Psoas muscle (tissue), 8 donors: ENCODE measurements at regions of chr2 and their contacts with region 1.

Region 1: DNA sequence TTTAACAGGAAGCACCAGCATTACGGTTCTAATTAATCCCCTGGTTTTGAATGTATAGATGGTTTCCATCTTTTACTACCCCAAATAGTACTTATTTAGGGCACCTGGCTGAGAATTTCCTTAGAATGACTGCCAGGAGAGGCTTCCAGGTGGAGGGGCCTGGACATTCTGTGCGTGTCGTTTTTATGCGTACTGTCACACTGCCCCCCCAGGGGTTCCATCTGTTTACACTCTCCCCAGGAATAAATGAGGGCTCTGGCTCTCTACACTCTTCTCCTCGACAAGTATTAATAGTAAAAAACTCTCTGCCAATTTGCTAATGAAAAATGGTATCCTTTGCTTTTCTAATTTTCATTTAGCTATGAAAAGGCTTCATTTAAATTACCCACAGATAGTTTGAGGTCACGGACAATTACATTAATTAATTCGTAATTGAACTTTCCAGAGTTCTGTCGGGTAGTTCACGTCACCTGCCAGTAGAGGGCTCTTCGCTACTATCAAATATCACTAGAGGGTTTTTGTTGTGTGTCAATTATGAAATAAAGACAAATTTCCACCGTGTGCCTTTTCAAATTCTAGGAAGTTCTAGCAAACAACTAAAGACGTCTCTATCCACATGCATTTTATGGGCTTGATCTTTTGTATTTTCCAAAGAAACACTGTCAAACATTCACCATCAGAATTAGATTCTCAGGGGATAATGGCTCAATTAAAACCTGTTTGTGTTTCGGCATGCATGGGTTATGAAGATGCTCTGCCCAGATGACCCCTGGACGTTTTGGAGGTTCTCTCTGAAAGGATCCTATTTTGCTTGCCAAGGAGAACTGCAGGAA is 88.8 kb upstream of the ASB18 start:
- DNase-seq: no peak
- ATAC-seq: peak in 2 of 4 donors; percentile 53 to 74
- H3K4me3 ChIP-seq: no peak overlapping the region
- H3K27ac ChIP-seq: no peak overlapping the region
- H3K4me1 ChIP-seq: no peaks in the 10 kb centered on the region
- H3K27me3 ChIP-seq: no peaks in the 10 kb centered on the region
- CTCF ChIP-seq: peak; percentile 79

Region 2: GRCh38 chr2:236512902-236513435 is 160.0 kb after region 1 on chr2:
- intact Hi-C with region 1: loop called in 1 of 2 experiments (anchors 5 kb)
- DNase-seq: peak; percentile 55 to 77
- ATAC-seq: peak; percentile 73 to 94 (median 89)
- H3K4me3 ChIP-seq: no peak overlapping the region
- H3K27ac ChIP-seq: no peak overlapping the region
- H3K4me1 ChIP-seq: no peaks in the 10 kb centered on the region
- H3K27me3 ChIP-seq: peaks cover 0 to 3% (median 2%) of the 10 kb centered on the region in 3 donors
- CTCF ChIP-seq: peak; percentile 78

Region 3: DNA sequence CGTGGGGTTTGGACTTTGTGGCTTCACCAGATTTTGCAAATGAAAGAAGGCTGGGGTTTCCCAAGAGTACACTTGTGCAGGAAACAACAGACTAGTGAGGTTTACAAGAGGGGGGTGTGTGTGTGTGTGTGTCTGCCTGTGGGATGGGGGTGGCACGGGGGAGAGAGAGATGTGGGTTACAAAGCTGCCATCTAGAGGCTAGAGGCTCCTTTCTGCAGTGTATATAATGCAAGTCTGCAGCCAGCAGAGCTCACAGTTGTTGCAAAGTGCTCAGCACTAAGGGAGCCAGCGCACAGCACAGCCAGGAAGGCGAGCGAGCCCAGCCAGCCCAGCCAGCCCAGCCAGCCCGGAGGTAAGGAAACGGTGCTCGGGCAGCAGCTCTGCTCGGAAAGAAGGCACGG is 216.6 kb after region 1 on chr2 and contains the start of gene ACKR3:
- intact Hi-C with region 1: loop called in 1 of 2 experiments (anchors 2 kb)
- DNase-seq: peak; percentile 72 to 87
- ATAC-seq: peak; percentile 78 to 84 (median 79)
- H3K4me3 ChIP-seq: peak within 1 kb of the TSS; percentile 65
- H3K27ac ChIP-seq: peak within 1 kb of the TSS; percentile 79
- H3K4me1 ChIP-seq: peaks cover 39% of the 10 kb centered on the region
- H3K27me3 ChIP-seq: no peaks in the 10 kb centered on the region
- CTCF ChIP-seq: peak; percentile 23
- total RNA-seq, gene ACKR3: 7.8 to 23.2 (median 13.7) TPM

Region 4: DNA sequence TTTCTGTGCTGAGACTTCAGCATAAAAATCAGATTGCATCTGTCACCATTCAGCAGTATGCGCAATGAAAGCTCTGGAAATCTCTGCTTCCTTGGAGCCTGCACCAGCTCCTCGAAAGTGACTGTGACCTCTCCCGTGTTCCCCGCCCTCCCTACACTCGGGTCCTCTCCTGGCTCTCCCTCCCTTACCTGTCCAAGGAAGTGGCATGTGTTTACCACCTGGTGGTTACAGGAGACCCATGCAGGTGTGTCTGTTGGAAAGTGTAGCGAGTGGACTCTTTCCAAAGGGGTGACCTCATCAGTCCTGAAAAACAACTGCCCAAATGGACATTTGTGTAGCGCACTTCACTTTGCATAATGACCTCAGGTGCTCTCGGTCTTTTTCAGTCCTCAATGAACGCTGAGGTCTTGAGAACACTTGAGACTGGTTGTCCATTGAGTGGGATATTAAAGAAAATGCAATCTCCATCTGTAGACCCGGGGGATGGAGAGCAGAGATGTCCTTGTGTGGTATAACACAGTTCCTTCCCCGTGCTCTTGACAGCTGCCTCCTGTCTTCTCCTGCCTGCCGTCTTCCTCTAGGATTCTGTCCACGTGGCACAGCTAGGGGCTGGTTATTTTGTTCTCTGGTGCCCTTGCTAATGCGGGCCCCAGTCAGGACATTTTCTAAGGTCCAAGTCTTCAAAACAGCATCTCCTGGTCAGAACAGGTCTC is 349.8 kb after region 1 on chr2:
- intact Hi-C with region 1: no loop called
- DNase-seq: no peak
- ATAC-seq: no peak
- H3K4me3 ChIP-seq: no peak overlapping the region
- H3K27ac ChIP-seq: no peak overlapping the region
- H3K4me1 ChIP-seq: no peaks in the 10 kb centered on the region
- H3K27me3 ChIP-seq: no peaks in the 10 kb centered on the region
- CTCF ChIP-seq: no peak

Region 5: GRCh38 chr2:237026981-237027711 is 674.2 kb after region 1 on chr2:
- intact Hi-C with region 1: loop called (anchors 1 to 2 kb)
- DNase-seq: peak; percentile 77 to 83
- ATAC-seq: peak; percentile 93 to 98 (median 94)
- H3K4me3 ChIP-seq: no peak overlapping the region
- H3K27ac ChIP-seq: no peak overlapping the region
- H3K4me1 ChIP-seq: no peaks in the 10 kb centered on the region
- H3K27me3 ChIP-seq: peaks cover 0 to 2% (median 0%) of the 10 kb centered on the region in 3 donors
- CTCF ChIP-seq: peak; percentile 93

Region 6: DNA sequence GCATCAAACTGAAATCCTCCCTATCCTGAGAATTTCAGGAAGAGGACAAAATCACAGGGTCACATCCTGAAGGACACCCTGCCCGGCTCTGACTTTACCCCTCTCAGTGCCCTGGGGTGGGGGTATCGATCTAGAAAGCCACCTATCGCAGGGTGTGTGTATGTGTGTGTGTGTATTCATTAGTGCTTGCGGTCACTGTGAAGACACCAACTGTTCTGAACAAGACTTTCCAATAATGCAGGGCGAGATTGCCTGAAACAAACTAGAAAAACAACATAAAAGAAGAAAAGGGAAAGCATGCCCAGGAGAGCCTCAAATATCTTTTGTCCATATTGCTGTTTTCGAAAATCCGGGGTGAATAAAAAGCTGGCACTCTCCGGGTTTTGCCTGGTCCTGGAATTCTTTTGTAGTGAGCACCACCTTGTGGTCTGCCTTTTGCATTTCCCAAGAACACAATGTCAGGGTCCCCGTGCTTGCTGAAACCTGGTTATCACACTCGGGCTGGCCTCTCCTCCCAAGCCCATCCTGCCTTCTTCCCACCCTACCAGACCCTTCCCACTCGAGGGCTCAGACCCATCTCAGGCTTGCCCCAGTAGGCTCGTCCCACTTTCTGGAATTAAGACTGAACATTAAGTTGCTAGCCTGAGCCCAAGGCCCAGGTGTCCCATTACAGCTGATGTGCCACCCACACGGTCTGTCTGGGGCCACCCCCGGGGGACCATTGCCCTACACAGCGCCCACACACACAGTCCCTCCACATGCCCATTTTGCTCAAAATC is 707.7 kb after region 1 on chr2:
- intact Hi-C with region 1: loop called (anchors 5 kb)
- DNase-seq: no peak
- ATAC-seq: peak; percentile 46 to 91 (median 79)
- H3K4me3 ChIP-seq: no peak overlapping the region
- H3K27ac ChIP-seq: no peak overlapping the region
- H3K4me1 ChIP-seq: peaks cover 9% of the 10 kb centered on the region
- H3K27me3 ChIP-seq: no peaks in the 10 kb centered on the region
- CTCF ChIP-seq: peak; percentile 57